H1 (cell line): ENCODE measurements at regions of chrX and their contacts with region 1.

Region 1: GRCh38 chrX:130916636-130917422 is 13.8 kb upstream of the ENOX2 start:
- DNase-seq: peak in 1 of 2 experiments; percentile 47
- H3K4me3 ChIP-seq: no peak overlapping the region
- H3K27ac ChIP-seq: no peak overlapping the region
- H3K4me1 ChIP-seq: no peaks in the 10 kb centered on the region
- H3K27me3 ChIP-seq: no peaks in the 10 kb centered on the region
- CTCF ChIP-seq: peak in 2 of 3 experiments; percentile 58 to 69; a peak in 3 of 4 replicates
- EP300 ChIP-seq: no peak
- POLR2A ChIP-seq: no peak
- RAD21 ChIP-seq: peak; percentile 89 to 91

Region 2: GRCh38 chrX:130550351-130550750 is 366.5 kb before region 1 on chrX:
- CTCF ChIA-PET with region 1: interaction called, 13 read pairs
- POLR2A ChIA-PET with region 1: no interaction called
- DNase-seq: no peak
- H3K4me3 ChIP-seq: no peak overlapping the region
- H3K27ac ChIP-seq: no peak overlapping the region
- H3K4me1 ChIP-seq: peaks cover 0 to 3% (median 0%) of the 10 kb centered on the region in 4 experiments; a peak in 1 of 7 replicates
- H3K27me3 ChIP-seq: no peaks in the 10 kb centered on the region
- CTCF ChIP-seq: no peak
- EP300 ChIP-seq: no peak
- POLR2A ChIP-seq: no peak
- RAD21 ChIP-seq: no peak

Region 3: DNA sequence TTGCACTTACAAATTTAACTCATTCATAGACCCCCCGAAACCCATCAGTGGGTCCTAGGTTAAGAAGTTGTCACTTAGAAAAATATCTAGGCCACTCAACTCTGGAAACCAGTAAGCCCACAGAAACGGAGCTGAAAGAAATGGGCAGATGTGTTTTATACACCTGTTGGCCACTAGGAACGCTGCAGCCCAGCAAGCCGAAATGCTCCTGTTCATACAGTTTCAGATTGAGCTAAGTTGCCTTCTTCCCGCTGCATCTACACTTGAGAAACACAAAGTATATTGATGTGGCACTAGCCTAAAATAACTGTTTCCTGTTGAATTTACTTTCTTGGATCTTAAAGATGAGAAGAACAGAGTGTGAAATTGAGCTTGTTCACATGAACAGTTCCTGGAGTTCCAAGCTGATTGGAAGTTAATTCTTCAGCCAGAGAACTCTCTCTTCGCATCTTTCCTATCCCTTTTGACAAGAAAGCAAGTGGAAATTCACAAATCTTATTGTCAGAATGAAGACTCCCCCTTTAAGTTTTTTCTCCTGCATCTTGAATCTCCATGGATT is 340.9 kb before region 1 on chrX:
- CTCF ChIA-PET with region 1: interaction called, 22 read pairs
- POLR2A ChIA-PET with region 1: no interaction called
- DNase-seq: peak; percentile 5 to 43
- H3K4me3 ChIP-seq: no peak overlapping the region
- H3K27ac ChIP-seq: no peak overlapping the region
- H3K4me1 ChIP-seq: no peaks in the 10 kb centered on the region
- H3K27me3 ChIP-seq: no peaks in the 10 kb centered on the region
- CTCF ChIP-seq: peak; percentile 56 to 73 (median 62)
- EP300 ChIP-seq: no peak
- POLR2A ChIP-seq: no peak
- RAD21 ChIP-seq: peak; percentile 75 to 83

Region 4: DNA sequence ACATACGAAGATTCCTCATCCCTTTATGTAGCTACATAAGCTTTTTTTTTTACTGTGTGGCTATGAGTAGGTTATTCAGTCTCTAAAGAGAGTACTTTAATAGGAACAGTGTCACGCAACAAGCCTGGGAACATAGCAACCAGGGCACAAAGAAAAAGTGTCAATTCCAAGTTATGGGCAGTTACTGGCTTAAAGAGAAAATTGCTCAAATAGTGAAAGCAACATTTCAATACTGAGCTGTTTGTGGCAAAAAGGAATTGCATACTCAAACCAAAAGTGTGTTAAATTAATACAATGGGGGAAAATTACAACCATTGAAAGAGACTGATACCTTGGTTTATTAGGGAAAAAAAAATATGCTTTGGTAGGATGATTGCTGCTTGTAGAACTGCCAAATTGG is 27.4 kb after region 1 on chrX:
- CTCF ChIA-PET with region 1: interaction called, 11 read pairs
- POLR2A ChIA-PET with region 1: no interaction called
- DNase-seq: no peak
- H3K4me3 ChIP-seq: no peak overlapping the region
- H3K27ac ChIP-seq: no peak overlapping the region
- H3K4me1 ChIP-seq: no peaks in the 10 kb centered on the region
- H3K27me3 ChIP-seq: no peaks in the 10 kb centered on the region
- CTCF ChIP-seq: no peak
- EP300 ChIP-seq: no peak
- POLR2A ChIP-seq: no peak
- RAD21 ChIP-seq: no peak

Region 5: DNA sequence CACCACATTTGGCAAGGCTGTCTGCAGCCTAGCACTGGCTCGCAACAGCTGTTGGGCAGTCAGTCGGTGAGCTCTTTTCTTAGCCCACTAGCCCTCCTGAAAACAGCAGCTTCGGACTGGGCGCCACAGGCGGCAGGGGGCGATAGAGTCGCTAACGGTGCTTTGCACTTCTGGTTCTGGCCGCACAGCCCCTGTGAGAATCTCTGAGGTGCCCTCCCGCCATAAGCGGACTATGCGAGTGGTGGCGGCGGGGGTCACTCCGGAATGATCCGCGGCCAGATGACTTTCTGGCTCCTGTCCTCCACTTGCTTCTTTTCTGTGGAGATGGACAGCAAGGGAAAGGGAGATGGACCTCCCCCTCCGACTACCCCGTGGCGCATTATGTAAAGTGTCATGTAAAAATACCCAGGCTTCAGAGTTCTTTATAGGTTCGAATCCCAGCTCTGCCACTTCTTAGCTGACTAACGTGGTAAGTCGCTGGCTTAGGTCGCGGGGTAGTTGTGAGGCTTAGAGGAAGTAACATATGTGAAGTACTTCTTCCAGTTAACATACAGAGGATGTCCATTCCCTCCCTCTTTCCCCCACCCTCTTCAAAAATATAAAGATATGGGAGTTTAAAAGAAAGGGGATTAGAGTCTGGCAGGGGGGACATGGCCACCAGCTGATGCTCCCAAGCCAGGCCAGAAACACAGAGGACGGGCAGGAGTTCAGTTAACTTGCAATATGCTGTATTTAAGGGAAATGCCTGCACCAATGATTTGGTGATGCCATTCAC is 152.3 kb after region 1 on chrX:
- CTCF ChIA-PET with region 1: no interaction called
- POLR2A ChIA-PET with region 1: no interaction called
- DNase-seq: peak in 1 of 2 experiments; percentile 80
- H3K4me3 ChIP-seq: peak overlapping the region; percentile 12 to 56 (median 32); a peak in 6 of 8 replicates
- H3K27ac ChIP-seq: no peak overlapping the region
- H3K4me1 ChIP-seq: peaks cover 0 to 5% (median 3%) of the 10 kb centered on the region in 4 experiments; a peak in 6 of 7 replicates
- H3K27me3 ChIP-seq: peaks cover 13 to 58% (median 46%) of the 10 kb centered on the region in 4 experiments
- CTCF ChIP-seq: peak; percentile 65 to 74 (median 67)
- EP300 ChIP-seq: no peak
- POLR2A ChIP-seq: no peak
- RAD21 ChIP-seq: peak; percentile 43 to 58